ENCODE measurements at regions of chr15 and their contacts with region 1.

Region 1: GRCh38 chr15:78909791-78910228 is 35.0 kb downstream of the CTSH start:
- DNase-seq: peak; percentile 66
- H3K4me3 ChIP-seq: no peak overlapping the region
- H3K27ac ChIP-seq: no peak overlapping the region
- H3K4me1 ChIP-seq: no peaks in the 10 kb centered on the region
- CTCF ChIP-seq: peak; percentile 93

Region 2: DNA sequence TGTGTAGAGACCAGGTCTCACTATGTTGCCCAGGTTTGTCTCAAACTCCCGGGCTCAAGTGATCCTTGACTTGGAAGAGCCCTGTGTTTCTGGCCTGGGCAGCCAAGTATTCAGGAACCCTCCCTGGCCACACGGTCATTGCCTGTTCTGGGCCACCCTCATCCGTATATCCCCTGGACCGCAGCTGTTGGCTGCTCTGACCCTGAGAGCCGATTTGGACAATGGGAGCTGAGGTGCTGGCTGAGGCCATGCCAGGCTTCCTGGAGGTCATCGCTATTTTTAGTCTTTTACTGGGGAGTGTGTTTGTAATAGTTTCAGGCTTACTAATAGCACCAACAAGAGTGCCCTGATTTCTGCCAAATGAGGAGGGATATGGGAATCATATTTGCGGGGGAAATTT is 159.2 kb before region 1 on chr15:
- CTCF ChIA-PET with region 1: no interaction called
- POLR2A ChIA-PET with region 1: no interaction called
- intact Hi-C with region 1: no loop called
- DNase-seq: no peak
- H3K4me3 ChIP-seq: peak overlapping the region; percentile 23
- H3K27ac ChIP-seq: no peak overlapping the region
- H3K4me1 ChIP-seq: peaks cover 1% of the 10 kb centered on the region
- CTCF ChIP-seq: no peak

Region 3: GRCh38 chr15:78979456-78980320 is 69.9 kb after region 1 on chr15:
- CTCF ChIA-PET with region 1: interaction called, 3 read pairs
- POLR2A ChIA-PET with region 1: no interaction called
- intact Hi-C with region 1: loop called (anchors 1 kb)
- DNase-seq: peak; percentile 71
- H3K4me3 ChIP-seq: no peak overlapping the region
- H3K27ac ChIP-seq: no peak overlapping the region
- H3K4me1 ChIP-seq: peaks cover 15% of the 10 kb centered on the region
- CTCF ChIP-seq: peak; percentile 92

Region 4: GRCh38 chr15:79004336-79004735 is 94.5 kb after region 1 on chr15:
- CTCF ChIA-PET with region 1: interaction called, 4 read pairs
- POLR2A ChIA-PET with region 1: interaction called, 4 read pairs
- intact Hi-C with region 1: loop called (anchors 1 kb)
- DNase-seq: peak; percentile 93
- H3K4me3 ChIP-seq: peak overlapping the region; percentile 55
- H3K27ac ChIP-seq: peak overlapping the region; percentile 57
- H3K4me1 ChIP-seq: peaks cover 59% of the 10 kb centered on the region
- CTCF ChIP-seq: no peak

Region 5: GRCh38 chr15:79028411-79028964 is 118.7 kb after region 1 on chr15:
- CTCF ChIA-PET with region 1: no interaction called
- POLR2A ChIA-PET with region 1: interaction called, 4 read pairs
- intact Hi-C with region 1: loop called (anchors 1 kb)
- DNase-seq: peak; percentile 68
- H3K4me3 ChIP-seq: no peak overlapping the region
- H3K27ac ChIP-seq: no peak overlapping the region
- H3K4me1 ChIP-seq: peaks cover 6% of the 10 kb centered on the region
- CTCF ChIP-seq: peak; percentile 99

Region 6: GRCh38 chr15:79154483-79155135 is 244.8 kb after region 1 on chr15:
- CTCF ChIA-PET with region 1: no interaction called
- POLR2A ChIA-PET with region 1: no interaction called
- intact Hi-C with region 1: no loop called
- DNase-seq: no peak
- H3K4me3 ChIP-seq: no peak overlapping the region
- H3K27ac ChIP-seq: no peak overlapping the region
- H3K4me1 ChIP-seq: no peaks in the 10 kb centered on the region
- CTCF ChIP-seq: no peak

Region 7: GRCh38 chr15:79184465-79184892 is 274.7 kb after region 1 on chr15:
- CTCF ChIA-PET with region 1: no interaction called
- POLR2A ChIA-PET with region 1: no interaction called
- intact Hi-C with region 1: loop called (anchors 1 kb)
- DNase-seq: peak; percentile 81
- H3K4me3 ChIP-seq: no peak overlapping the region
- H3K27ac ChIP-seq: no peak overlapping the region
- H3K4me1 ChIP-seq: no peaks in the 10 kb centered on the region
- CTCF ChIP-seq: peak; percentile 100